Transverse colon (tissue), 4 donors: ENCODE measurements at regions of chr11 and their contacts with region 1.

Region 1: DNA sequence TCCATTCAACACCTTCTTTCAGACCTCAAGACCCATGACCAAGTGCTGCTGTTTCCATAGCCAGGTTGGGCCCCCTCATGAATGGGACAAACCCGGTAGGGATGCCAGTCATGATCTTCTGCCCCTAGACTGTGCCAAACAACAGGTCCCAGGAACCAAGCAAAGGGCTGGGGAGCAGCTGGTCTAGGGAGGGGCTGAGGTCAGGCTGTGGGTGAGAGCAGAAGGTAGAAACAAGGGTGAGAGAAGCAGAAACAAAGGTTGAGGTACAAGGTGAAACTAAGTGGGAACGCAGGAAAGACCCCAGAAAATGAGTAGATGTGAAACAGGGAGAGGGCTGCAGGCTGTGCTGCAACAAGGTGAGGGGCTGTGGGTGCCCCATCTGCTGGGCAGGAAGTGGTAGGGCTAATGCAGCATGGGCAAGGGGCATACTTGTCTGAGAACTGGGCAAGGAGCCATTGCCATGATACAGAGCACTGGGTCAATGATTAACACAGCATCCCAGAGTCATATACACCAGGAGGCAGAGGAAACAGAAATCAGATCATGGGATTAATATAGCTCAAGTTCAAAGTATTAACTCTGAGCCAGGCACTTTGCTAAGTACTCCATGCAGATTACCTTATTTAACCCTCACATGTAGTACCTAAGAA is 45.9 kb downstream of the SLC1A2 start:
- DNase-seq: peak; percentile 30
- H3K4me3 ChIP-seq: no peak overlapping the region
- H3K27ac ChIP-seq: no peak overlapping the region
- H3K4me1 ChIP-seq: no peaks in the 10 kb centered on the region
- H3K27me3 ChIP-seq: no peaks in the 10 kb centered on the region
- CTCF ChIP-seq: peak in 1 of 5 experiments; percentile 8
- EP300 ChIP-seq: no peak
- POLR2A ChIP-seq: no peak

Region 2: DNA sequence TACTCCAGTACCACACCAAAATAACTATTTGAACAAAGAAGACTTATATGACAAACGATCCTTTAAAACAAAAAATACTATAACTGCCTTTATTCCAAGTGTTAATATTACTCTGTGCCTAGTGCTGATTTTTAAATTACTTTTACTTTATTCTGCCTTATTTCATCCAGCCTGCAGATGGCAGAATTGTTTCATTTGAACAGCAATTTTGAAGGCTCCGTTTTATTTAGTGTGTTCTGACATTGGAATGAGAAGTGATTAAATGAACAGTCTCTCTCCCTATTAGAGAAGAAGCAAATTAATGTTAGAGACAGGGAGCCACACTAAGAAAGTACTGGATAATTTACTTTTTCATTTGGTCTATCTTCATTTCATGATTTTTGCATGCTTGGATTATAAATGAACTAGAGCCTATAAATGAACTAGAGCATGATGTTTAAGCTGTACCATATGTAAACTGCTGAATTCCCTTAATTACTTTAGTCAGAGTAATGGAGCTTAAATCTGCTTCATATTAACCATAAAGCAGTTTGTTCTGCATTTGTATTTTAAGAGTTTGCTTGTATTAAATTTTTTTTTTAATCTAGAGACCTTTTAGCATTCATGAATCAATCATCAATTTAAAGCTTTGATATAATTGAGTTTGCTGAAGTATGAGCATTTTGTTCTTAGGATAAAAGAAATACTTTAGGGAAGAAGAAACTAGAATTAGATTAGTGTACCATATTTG is 447.1 kb before region 1 on chr11:
- in situ Hi-C with region 1: loop called in 1 of 4 experiments (anchors 10 kb)
- intact Hi-C with region 1: no loop called
- DNase-seq: no peak
- H3K4me3 ChIP-seq: no peak overlapping the region
- H3K27ac ChIP-seq: no peak overlapping the region
- H3K4me1 ChIP-seq: peaks cover 3 to 51% (median 23%) of the 10 kb centered on the region in 4 donors
- H3K27me3 ChIP-seq: no peaks in the 10 kb centered on the region
- CTCF ChIP-seq: peak; percentile 64 to 73 (median 68)
- EP300 ChIP-seq: no peak
- POLR2A ChIP-seq: no peak

Region 3: GRCh38 chr11:35260342-35260985 is 112.9 kb before region 1 on chr11:
- in situ Hi-C with region 1: no loop called
- intact Hi-C with region 1: no loop called
- DNase-seq: no peak
- H3K4me3 ChIP-seq: no peak overlapping the region
- H3K27ac ChIP-seq: peak overlapping the region in 3 of 4 donors; percentile 11 to 35 (median 29)
- H3K4me1 ChIP-seq: peaks cover 0 to 8% (median 0%) of the 10 kb centered on the region in 4 donors
- H3K27me3 ChIP-seq: no peaks in the 10 kb centered on the region
- CTCF ChIP-seq: no peak
- EP300 ChIP-seq: no peak
- POLR2A ChIP-seq: no peak

Region 4: GRCh38 chr11:35334385-35335090 is 38.9 kb before region 1 on chr11:
- in situ Hi-C with region 1: no loop called
- intact Hi-C with region 1: no loop called
- DNase-seq: no peak
- H3K4me3 ChIP-seq: no peak overlapping the region
- H3K27ac ChIP-seq: no peak overlapping the region
- H3K4me1 ChIP-seq: no peaks in the 10 kb centered on the region
- H3K27me3 ChIP-seq: no peaks in the 10 kb centered on the region
- CTCF ChIP-seq: no peak
- EP300 ChIP-seq: no peak
- POLR2A ChIP-seq: no peak

Region 5: DNA sequence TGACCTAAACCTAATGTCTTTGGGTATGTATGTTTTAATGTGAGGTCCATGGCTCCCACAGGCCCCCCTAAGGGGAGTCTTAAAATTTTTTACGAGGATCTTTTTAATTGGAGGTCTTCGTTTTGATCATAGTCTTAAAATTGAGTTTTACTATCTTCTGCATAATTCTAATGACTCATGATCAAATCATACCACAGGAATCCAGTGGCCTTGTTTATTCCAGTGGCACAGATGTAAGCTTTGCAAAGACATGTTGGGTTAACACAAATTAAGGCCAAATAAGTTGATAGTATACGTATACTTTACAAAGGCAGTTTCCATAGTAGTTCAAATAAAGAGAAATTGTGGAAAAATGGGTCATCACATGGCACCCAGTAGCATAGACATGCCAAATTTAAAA is 210.9 kb after region 1 on chr11:
- in situ Hi-C with region 1: no loop called
- intact Hi-C with region 1: no loop called
- DNase-seq: no peak
- H3K4me3 ChIP-seq: no peak overlapping the region
- H3K27ac ChIP-seq: no peak overlapping the region
- H3K4me1 ChIP-seq: no peaks in the 10 kb centered on the region
- H3K27me3 ChIP-seq: peaks cover 20% of the 10 kb centered on the region
- CTCF ChIP-seq: no peak
- EP300 ChIP-seq: no peak
- POLR2A ChIP-seq: no peak